CD8-positive, alpha-beta T cell (primary cell): ENCODE measurements at regions of chr19 and their contacts with region 1.

Region 1: DNA sequence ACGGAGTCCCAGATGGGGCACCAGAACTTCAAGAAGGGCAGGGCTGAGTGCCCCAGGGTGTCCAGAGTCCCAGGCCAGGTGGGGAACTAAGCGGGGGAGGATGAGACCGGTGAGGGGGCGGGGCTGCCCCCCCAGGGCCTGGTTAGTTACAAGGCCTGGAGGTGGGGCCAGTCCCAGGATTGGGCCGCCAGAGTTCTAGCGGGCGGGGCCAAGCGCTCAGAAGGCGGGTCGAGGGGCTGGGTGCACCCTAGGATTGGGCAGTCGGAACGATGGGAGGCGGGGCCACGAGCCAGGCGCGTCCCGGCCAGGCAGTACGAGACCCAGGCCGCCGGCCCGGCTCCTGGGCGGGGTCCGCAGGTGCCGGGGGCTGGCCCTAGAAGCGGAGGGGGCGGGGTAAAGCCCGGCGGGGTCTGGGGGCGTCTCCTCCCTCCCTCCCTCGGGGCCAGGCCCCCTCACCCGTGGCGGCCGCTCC is 571 bp downstream of the ZNF653 start:
- DNase-seq: peak; percentile 92 to 98 (median 96)
- ATAC-seq: peak; percentile 95
- H3K4me3 ChIP-seq: peak overlapping the region; percentile 56 to 96
- H3K4me3 Mint-ChIP-seq: peak overlapping the region; percentile 93
- H3K27ac ChIP-seq: peak overlapping the region; percentile 58 to 97
- H3K27ac Mint-ChIP-seq: peak overlapping the region; percentile 84
- H3K4me1 ChIP-seq: peaks cover 14% of the 10 kb centered on the region
- H3K4me1 Mint-ChIP-seq: peaks cover 18% of the 10 kb centered on the region
- H3K27me3 ChIP-seq: no peaks in the 10 kb centered on the region
- H3K27me3 Mint-ChIP-seq: no peaks in the 10 kb centered on the region
- CTCF ChIP-seq: no peak

Region 2: DNA sequence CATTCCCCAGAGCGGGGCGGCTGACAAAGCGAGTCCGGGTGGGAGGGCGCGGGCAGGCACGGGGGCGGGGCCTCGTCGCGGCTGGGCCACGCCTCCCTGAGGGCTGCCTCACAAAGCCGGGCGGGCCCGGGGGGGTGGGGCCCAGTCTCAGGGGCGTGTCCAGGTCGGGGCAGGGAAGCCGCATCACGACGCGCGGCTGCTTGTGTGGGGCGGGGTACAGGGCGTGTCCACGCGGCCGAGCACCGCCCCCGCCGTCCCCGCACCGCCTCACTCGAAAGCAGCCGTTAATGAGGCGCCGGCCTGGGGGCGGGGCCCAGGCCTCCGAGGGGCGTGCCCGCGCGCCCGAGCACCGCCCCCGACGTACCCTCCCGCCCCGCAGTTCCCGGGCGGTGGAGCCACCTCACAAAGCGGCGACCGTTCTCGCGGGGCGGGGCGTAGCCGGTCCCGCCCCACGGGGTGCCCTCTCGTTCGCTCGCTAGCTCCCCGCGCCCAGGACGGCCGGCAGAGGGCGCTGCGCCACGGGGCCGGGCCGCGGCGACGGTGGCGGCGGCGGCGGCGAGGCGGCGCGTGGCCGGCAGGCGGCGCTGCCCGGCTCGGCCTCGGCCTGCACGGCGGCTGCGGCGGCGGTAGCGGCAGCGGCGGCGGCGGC is 634.0 kb before region 1 on chr19 and contains the start of gene CARM1:
- CTCF ChIA-PET with region 1: no interaction called
- POLR2A ChIA-PET with region 1: no interaction called
- intact Hi-C with region 1: loop called in 1 of 2 experiments (anchors 10 kb)
- DNase-seq: peak; percentile 97 to 99 (median 99)
- ATAC-seq: peak; percentile 87
- H3K4me3 ChIP-seq: peak within 1 kb of the TSS; percentile 59 to 62
- H3K4me3 Mint-ChIP-seq: peak within 1 kb of the TSS; percentile 89
- H3K27ac ChIP-seq: peak within 1 kb of the TSS; percentile 37 to 76
- H3K27ac Mint-ChIP-seq: peak within 1 kb of the TSS; percentile 84
- H3K4me1 ChIP-seq: peaks cover 17% of the 10 kb centered on the region
- H3K4me1 Mint-ChIP-seq: peaks cover 19% of the 10 kb centered on the region
- H3K27me3 ChIP-seq: no peaks in the 10 kb centered on the region
- H3K27me3 Mint-ChIP-seq: no peaks in the 10 kb centered on the region
- CTCF ChIP-seq: no peak
- total RNA-seq, gene CARM1: 18.1 to 21.3 TPM

Region 3: DNA sequence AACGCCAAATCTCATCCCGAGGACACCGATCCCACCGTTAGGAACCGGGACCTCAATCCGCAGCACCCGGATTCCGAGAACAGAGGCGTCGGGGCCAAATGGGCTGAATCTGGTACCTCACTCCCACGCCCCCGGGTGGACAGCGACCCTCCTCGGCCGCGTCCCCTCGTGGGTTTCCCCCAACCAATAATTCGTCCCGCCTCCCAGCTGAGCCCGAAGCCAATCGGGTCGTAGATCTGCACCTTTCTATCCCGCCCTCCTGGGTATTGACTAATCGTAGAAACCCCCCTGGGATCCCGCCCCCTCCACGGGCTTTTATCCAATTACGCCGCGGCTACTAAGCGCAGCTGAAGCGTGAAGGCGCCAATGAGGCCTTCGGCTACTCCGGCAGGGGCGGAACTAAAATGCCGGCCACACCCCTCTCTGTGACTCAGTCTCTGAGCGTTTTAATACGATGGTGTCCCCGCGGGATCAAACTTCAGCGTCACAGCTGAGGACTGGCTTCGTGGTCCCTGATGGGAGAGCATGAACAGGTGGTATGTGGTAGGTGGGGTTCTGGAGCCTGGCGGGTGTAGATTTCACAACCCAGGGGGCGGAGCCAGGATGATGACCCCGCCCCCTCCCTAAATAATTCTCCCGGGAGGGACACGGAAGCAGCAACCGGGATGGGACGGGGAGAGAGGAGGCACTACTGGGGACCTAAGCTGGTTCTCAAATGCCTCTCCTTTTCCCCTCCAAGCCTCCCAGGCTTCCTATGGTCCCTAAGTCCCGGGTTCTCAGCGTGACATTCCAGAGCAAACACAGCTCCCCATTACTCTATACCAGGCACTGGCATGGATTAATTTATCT is 158.8 kb before region 1 on chr19 and contains the starts of genes CCDC159 and TMEM205:
- CTCF ChIA-PET with region 1: no interaction called
- POLR2A ChIA-PET with region 1: no interaction called
- intact Hi-C with region 1: loop called (anchors 1 kb)
- DNase-seq: peak; percentile 96 to 100 (median 98)
- ATAC-seq: peak; percentile 95
- H3K4me3 ChIP-seq: peak within 1 kb of the TSS; percentile 96 to 100
- H3K4me3 Mint-ChIP-seq: peak within 1 kb of the TSS; percentile 93
- H3K27ac ChIP-seq: peak within 1 kb of the TSS; percentile 73 to 77
- H3K27ac Mint-ChIP-seq: peak within 1 kb of the TSS; percentile 88
- H3K4me1 ChIP-seq: peaks cover 17% of the 10 kb centered on the region
- H3K4me1 Mint-ChIP-seq: peaks cover 27% of the 10 kb centered on the region
- H3K27me3 ChIP-seq: no peaks in the 10 kb centered on the region
- H3K27me3 Mint-ChIP-seq: no peaks in the 10 kb centered on the region
- CTCF ChIP-seq: no peak
- total RNA-seq, gene CCDC159: 26.9 to 36.4 TPM
- total RNA-seq, gene TMEM205: 6.5 to 10.6 TPM

Region 4: DNA sequence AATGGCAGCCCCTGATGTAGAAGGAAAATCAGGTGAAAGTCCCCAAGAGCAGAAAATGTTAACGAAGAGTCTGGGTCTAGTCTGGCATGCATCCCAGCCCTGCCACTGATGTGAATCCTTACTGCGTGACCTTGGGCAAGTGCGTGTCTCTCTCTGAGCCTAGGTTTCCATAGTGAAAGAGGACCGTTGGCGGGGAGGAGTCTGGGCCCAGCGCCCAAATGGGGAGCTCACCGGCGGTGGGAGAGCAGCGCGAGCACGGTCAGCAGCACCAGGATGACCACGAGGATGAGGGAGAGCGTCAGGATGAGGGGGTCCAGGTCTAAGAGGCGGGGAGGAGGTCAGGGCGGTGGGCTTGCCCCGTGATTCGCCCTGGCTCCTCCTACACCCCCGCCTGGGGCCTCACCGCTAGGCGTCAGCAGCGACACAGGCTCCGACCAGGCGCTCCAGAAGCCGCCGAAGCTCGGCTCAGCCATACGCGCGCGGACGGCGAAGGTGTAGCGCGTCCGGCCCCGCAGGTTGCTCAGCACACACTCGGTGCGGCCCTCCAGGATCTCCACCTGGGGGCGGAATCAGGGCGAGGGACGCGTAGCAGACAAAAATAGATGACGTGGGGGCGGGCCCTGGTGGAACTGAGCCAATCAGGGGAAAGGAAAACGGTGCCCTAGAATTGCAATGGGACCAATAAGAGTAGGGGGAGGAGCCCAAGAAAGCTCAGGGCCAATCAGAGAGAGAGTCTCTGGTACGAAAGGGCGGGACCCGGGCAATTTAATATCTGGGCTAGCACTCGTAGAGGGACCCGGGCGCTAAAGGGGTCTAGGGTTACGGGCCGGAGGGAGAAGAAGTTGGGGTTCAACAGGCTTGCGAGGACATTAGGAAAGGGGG is 124.2 kb before region 1 on chr19:
- CTCF ChIA-PET with region 1: no interaction called
- POLR2A ChIA-PET with region 1: no interaction called
- intact Hi-C with region 1: loop called (anchors 1 kb)
- DNase-seq: peak; percentile 93 to 99 (median 96)
- ATAC-seq: peak; percentile 83
- H3K4me3 ChIP-seq: peak overlapping the region; percentile 64 to 72
- H3K4me3 Mint-ChIP-seq: peak overlapping the region; percentile 94
- H3K27ac ChIP-seq: peak overlapping the region; percentile 80 to 89
- H3K27ac Mint-ChIP-seq: peak overlapping the region; percentile 99
- H3K4me1 ChIP-seq: peaks cover 47% of the 10 kb centered on the region
- H3K4me1 Mint-ChIP-seq: peaks cover 45% of the 10 kb centered on the region
- H3K27me3 ChIP-seq: peaks cover 6 to 23% of the 10 kb centered on the region in 2 experiments
- H3K27me3 Mint-ChIP-seq: peaks cover 19% of the 10 kb centered on the region
- CTCF ChIP-seq: peak; percentile 88

Region 5: DNA sequence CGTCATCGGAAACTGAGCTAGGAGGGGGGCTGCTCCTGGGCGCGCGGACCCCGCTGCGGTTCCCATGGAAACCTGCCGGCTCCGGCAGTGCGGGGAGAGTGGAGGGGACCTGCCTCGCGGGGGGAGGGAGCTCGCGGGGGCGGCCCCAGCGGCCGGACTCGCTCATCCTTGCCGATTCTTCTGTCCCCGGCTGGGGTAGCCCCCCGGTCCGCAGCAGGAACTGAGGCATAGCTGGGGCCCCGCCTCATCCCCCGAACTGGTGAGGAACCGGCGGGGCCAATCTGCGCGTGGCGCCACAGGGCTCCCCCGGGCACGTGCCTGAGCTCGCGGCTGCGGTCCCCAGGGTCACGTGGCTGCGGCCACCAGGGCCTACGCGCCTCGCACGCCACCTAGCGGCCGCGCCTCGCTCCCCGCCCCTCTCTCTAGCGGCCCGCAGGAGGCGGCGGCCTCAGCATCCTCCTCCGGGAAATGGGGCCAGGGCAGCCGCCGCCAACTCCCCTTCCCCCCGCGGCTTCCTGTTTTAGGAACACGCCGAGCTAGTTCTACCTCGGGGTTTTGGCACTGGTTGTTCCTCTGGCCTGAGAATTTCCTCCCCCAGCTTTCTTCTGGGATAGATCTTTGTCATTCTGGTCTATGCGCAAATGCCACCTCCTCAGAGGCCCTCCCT is 22.6 kb before region 1 on chr19:
- CTCF ChIA-PET with region 1: no interaction called
- POLR2A ChIA-PET with region 1: no interaction called
- intact Hi-C with region 1: loop called (anchors 1 kb)
- DNase-seq: peak; percentile 75 to 95 (median 83)
- ATAC-seq: peak; percentile 74
- H3K4me3 ChIP-seq: peak overlapping the region; percentile 17 to 27
- H3K4me3 Mint-ChIP-seq: peak overlapping the region; percentile 60
- H3K27ac ChIP-seq: no peak overlapping the region
- H3K27ac Mint-ChIP-seq: no peak overlapping the region
- H3K4me1 ChIP-seq: peaks cover 22% of the 10 kb centered on the region
- H3K4me1 Mint-ChIP-seq: peaks cover 22% of the 10 kb centered on the region
- H3K27me3 ChIP-seq: peaks cover 18 to 26% of the 10 kb centered on the region in 2 experiments
- H3K27me3 Mint-ChIP-seq: peaks cover 28% of the 10 kb centered on the region
- CTCF ChIP-seq: peak; percentile 88

Region 6: GRCh38 chr19:11535792-11536595 is 30.9 kb after region 1 on chr19:
- CTCF ChIA-PET with region 1: no interaction called
- POLR2A ChIA-PET with region 1: no interaction called
- intact Hi-C with region 1: loop called in 1 of 2 experiments (anchors 2 kb)
- DNase-seq: peak; percentile 70 to 91 (median 77)
- ATAC-seq: peak; percentile 87
- H3K4me3 ChIP-seq: peak overlapping the region; percentile 23 to 44
- H3K4me3 Mint-ChIP-seq: peak overlapping the region; percentile 66
- H3K27ac ChIP-seq: peak overlapping the region in 1 of 2 experiments; percentile 76
- H3K27ac Mint-ChIP-seq: peak overlapping the region; percentile 74
- H3K4me1 ChIP-seq: peaks cover 11% of the 10 kb centered on the region
- H3K4me1 Mint-ChIP-seq: peaks cover 8% of the 10 kb centered on the region
- H3K27me3 ChIP-seq: peaks cover 8 to 12% of the 10 kb centered on the region in 2 experiments
- H3K27me3 Mint-ChIP-seq: peaks cover 12% of the 10 kb centered on the region
- CTCF ChIP-seq: peak; percentile 78

Region 7: GRCh38 chr19:11597202-11598102 is 92.4 kb after region 1 on chr19 and contains the start of gene ZNF627:
- CTCF ChIA-PET with region 1: no interaction called
- POLR2A ChIA-PET with region 1: no interaction called
- intact Hi-C with region 1: loop called (anchors 1 to 2 kb)
- DNase-seq: peak; percentile 94 to 99 (median 98)
- ATAC-seq: peak; percentile 99
- H3K4me3 ChIP-seq: peak within 1 kb of the TSS; percentile 97 to 98
- H3K4me3 Mint-ChIP-seq: peak within 1 kb of the TSS; percentile 88
- H3K27ac ChIP-seq: peak within 1 kb of the TSS; percentile 89
- H3K27ac Mint-ChIP-seq: peak within 1 kb of the TSS; percentile 92
- H3K4me1 ChIP-seq: peaks cover 16% of the 10 kb centered on the region
- H3K4me1 Mint-ChIP-seq: peaks cover 32% of the 10 kb centered on the region
- H3K27me3 ChIP-seq: no peaks in the 10 kb centered on the region
- H3K27me3 Mint-ChIP-seq: no peaks in the 10 kb centered on the region
- CTCF ChIP-seq: no peak
- total RNA-seq, gene ZNF627: 10.7 to 11.0 TPM

Region 8: DNA sequence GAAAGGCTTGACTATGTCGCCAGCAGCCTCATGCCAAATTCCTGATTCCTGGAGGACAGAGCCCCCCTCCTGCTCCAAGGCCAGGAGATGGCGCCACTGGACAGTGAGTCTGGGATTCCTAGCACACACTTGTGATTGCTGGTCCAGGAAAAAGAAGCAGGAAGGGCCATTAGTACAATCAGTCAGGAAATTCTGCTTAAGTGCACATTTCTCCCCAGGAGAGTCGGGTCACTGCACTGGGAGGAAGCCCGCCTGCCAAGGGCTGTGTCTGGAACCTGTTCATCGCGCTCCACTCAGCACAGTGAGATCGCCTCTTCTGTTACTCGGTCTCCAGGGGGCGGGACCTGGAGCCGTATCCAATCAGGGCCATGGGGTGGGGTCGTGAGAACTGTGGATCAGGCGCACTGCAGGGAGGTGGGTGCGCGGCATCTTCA is 168.6 kb after region 1 on chr19:
- CTCF ChIA-PET with region 1: no interaction called
- POLR2A ChIA-PET with region 1: no interaction called
- intact Hi-C with region 1: no loop called
- DNase-seq: peak in 3 of 9 experiments; percentile 13 to 28 (median 15)
- ATAC-seq: no peak
- H3K4me3 ChIP-seq: no peak overlapping the region
- H3K4me3 Mint-ChIP-seq: peak overlapping the region; percentile 49
- H3K27ac ChIP-seq: no peak overlapping the region
- H3K27ac Mint-ChIP-seq: no peak overlapping the region
- H3K4me1 ChIP-seq: peaks cover 7% of the 10 kb centered on the region
- H3K4me1 Mint-ChIP-seq: peaks cover 6% of the 10 kb centered on the region
- H3K27me3 ChIP-seq: peaks cover 4 to 6% of the 10 kb centered on the region in 2 experiments
- H3K27me3 Mint-ChIP-seq: peaks cover 24% of the 10 kb centered on the region
- CTCF ChIP-seq: no peak